Activated naive CD4-positive, alpha-beta T cell treated with anti-CD3 and anti-CD28 coated beads for 36 hours (primary cell): ENCODE measurements at regions of chr2 and their contacts with region 1.

Region 1: DNA sequence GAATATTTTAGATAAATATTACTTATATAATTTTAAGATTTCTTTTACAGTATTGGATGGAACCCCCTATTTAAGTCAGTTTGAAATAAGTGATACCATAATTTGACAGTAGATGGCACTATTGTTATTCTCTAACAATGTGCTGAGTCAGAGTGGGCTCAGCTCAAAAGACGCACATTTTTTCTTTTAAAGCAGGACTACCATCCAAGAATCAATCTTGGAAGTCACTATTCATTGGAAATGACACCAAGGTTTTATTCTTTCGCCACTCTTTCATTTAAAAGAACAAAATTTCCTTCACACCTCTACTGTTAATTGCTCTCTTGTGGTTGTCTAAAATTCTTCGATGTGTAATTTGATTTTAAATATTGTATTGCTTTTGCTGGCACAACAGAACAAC is 32.6 kb upstream of the SPAG16 start:
- DNase-seq: no peak
- H3K4me3 Mint-ChIP-seq: no peak overlapping the region
- H3K27ac Mint-ChIP-seq: no peak overlapping the region
- H3K4me1 Mint-ChIP-seq: no peaks in the 10 kb centered on the region
- H3K27me3 Mint-ChIP-seq: peaks cover 6% of the 10 kb centered on the region

Region 2: DNA sequence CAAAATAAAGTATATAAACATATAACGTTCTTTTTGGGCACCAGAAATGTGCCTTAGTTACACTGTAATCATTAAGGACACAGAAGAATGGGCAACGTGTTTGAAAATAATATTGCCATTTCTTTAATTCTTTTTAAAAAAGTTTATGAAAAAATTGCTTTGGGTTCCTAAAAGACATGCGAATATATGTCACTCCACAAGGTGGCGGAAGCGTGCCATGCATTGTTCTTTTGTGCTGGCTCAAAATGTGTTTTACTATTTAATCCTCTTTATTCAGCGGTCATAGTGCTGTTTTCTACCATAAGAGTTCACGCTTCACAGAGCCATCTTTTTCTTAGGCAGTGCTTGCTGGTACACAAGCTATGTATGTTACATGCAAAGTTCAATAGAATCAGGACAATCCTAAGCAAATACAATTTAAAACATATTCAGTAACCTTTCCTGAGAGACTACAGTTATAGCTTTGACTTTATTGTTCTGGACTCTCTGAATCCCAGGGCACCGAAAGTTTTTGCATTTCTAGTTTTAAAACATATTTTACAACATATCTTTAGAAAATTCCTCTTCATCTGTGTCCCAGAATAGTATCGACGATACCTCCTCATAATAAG is 565.2 kb before region 1 on chr2:
- CTCF ChIA-PET with region 1: no interaction called
- intact Hi-C with region 1: loop called (anchors 1 kb)
- DNase-seq: peak; percentile 72
- H3K4me3 Mint-ChIP-seq: no peak overlapping the region
- H3K27ac Mint-ChIP-seq: no peak overlapping the region
- H3K4me1 Mint-ChIP-seq: no peaks in the 10 kb centered on the region
- H3K27me3 Mint-ChIP-seq: no peaks in the 10 kb centered on the region

Region 3: GRCh38 chr2:212777020-212777491 is 474.6 kb before region 1 on chr2:
- CTCF ChIA-PET with region 1: no interaction called
- intact Hi-C with region 1: loop called (anchors 5 kb)
- DNase-seq: no peak
- H3K4me3 Mint-ChIP-seq: no peak overlapping the region
- H3K27ac Mint-ChIP-seq: no peak overlapping the region
- H3K4me1 Mint-ChIP-seq: no peaks in the 10 kb centered on the region
- H3K27me3 Mint-ChIP-seq: peaks cover 2% of the 10 kb centered on the region

Region 4: DNA sequence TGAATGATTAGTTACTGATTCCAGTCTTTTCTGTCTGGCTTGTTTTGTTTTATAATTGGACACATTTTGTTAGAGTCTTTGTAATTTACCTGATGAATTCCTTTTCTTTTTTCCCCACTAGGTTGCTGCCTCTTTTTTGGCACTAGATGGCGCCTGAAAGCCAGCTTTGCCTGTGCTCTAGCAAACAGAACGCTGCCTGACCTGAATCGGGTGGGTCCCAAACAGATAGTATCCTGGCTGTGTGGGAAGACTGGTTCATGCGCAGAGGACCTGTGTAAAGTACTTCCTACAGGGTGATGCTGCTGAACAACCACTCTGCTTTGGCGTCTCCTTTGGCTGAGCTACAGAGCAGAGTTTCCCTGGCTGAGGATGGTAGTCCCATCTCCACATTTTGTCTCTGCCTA is 388.4 kb before region 1 on chr2:
- CTCF ChIA-PET with region 1: no interaction called
- intact Hi-C with region 1: loop called (anchors 2 kb)
- DNase-seq: peak; percentile 43
- H3K4me3 Mint-ChIP-seq: no peak overlapping the region
- H3K27ac Mint-ChIP-seq: no peak overlapping the region
- H3K4me1 Mint-ChIP-seq: no peaks in the 10 kb centered on the region
- H3K27me3 Mint-ChIP-seq: no peaks in the 10 kb centered on the region

Region 5: GRCh38 chr2:213537579-213537978 is 286.0 kb after region 1 on chr2:
- CTCF ChIA-PET with region 1: no interaction called
- intact Hi-C with region 1: no loop called
- DNase-seq: no peak
- H3K4me3 Mint-ChIP-seq: no peak overlapping the region
- H3K27ac Mint-ChIP-seq: no peak overlapping the region
- H3K4me1 Mint-ChIP-seq: no peaks in the 10 kb centered on the region
- H3K27me3 Mint-ChIP-seq: no peaks in the 10 kb centered on the region

Region 6: GRCh38 chr2:213806125-213806726 is 554.6 kb after region 1 on chr2:
- CTCF ChIA-PET with region 1: no interaction called
- intact Hi-C with region 1: loop called (anchors 5 kb)
- DNase-seq: no peak
- H3K4me3 Mint-ChIP-seq: no peak overlapping the region
- H3K27ac Mint-ChIP-seq: no peak overlapping the region
- H3K4me1 Mint-ChIP-seq: no peaks in the 10 kb centered on the region
- H3K27me3 Mint-ChIP-seq: no peaks in the 10 kb centered on the region

Region 7: DNA sequence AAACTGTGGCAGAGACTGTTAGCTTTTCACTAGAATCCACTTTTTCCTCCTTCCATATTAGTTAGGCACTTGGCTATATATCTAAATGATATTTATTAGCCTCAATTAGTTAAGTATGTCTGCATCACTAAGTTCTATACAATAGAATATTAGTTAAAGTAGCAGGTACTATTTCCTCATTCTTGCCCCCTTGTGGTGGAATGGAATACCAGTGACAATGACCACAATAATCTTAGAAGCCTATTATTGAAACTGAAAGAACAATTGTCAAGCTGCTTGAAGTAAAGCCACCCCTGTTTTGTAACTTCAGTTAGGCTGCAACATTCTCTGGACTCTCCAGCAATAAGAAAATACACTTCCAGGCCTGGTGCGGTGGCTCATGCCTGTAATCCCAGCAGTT is 682.9 kb after region 1 on chr2:
- CTCF ChIA-PET with region 1: interaction called, 3 read pairs
- intact Hi-C with region 1: loop called (anchors 1 kb)
- DNase-seq: no peak
- H3K4me3 Mint-ChIP-seq: no peak overlapping the region
- H3K27ac Mint-ChIP-seq: no peak overlapping the region
- H3K4me1 Mint-ChIP-seq: no peaks in the 10 kb centered on the region
- H3K27me3 Mint-ChIP-seq: peaks cover 2% of the 10 kb centered on the region

Region 8: GRCh38 chr2:215002500-215002899 is 1750.9 kb after region 1 on chr2:
- CTCF ChIA-PET with region 1: no interaction called
- intact Hi-C with region 1: loop called (anchors 2 kb)
- DNase-seq: peak; percentile 10
- H3K4me3 Mint-ChIP-seq: no peak overlapping the region
- H3K27ac Mint-ChIP-seq: no peak overlapping the region
- H3K4me1 Mint-ChIP-seq: no peaks in the 10 kb centered on the region
- H3K27me3 Mint-ChIP-seq: no peaks in the 10 kb centered on the region